ENCODE measurements at regions of chr11 and their contacts with region 1.

Region 1: GRCh38 chr11:29306527-29306926 is 710.3 kb downstream of the KCNA4 start:
- DNase-seq: no peak
- ATAC-seq: no peak
- H3K4me3 ChIP-seq: no peak overlapping the region
- H3K27ac ChIP-seq: no peak overlapping the region
- H3K4me1 ChIP-seq: no peaks in the 10 kb centered on the region
- H3K27me3 ChIP-seq: no peaks in the 10 kb centered on the region
- CTCF ChIP-seq: no peak
- POLR2A ChIP-seq: no peak

Region 2: DNA sequence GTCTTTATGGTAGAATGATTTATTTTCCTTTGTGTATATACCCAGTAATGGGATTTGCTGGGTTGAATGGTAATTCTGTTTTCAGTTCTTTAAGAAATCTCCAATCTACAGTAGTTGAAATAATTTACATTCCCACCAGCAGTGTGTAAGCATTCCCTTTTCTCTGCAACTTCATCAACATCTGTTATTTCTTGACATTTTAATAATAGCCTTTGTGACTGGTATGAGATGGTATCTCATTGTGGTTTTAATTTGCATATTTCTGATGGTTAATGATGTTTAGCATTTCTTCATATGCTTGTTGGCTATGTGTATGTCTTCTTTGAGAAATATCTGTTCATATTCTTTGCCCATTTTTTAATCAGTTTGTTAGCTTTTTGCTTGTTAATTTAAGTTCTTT is 297.1 kb before region 1 on chr11:
- intact Hi-C with region 1: no loop called
- DNase-seq: no peak
- ATAC-seq: no peak
- H3K4me3 ChIP-seq: no peak overlapping the region
- H3K27ac ChIP-seq: no peak overlapping the region
- H3K4me1 ChIP-seq: no peaks in the 10 kb centered on the region
- H3K27me3 ChIP-seq: no peaks in the 10 kb centered on the region
- CTCF ChIP-seq: no peak
- POLR2A ChIP-seq: no peak

Region 3: GRCh38 chr11:29243616-29244015 is 62.9 kb before region 1 on chr11:
- intact Hi-C with region 1: loop called in 1 of 10 experiments (anchors 10 kb)
- DNase-seq: no peak
- ATAC-seq: no peak
- H3K4me3 ChIP-seq: no peak overlapping the region
- H3K27ac ChIP-seq: no peak overlapping the region
- H3K4me1 ChIP-seq: no peaks in the 10 kb centered on the region
- H3K27me3 ChIP-seq: no peaks in the 10 kb centered on the region
- CTCF ChIP-seq: no peak
- POLR2A ChIP-seq: no peak

Region 4: GRCh38 chr11:29260939-29261705 is 45.4 kb before region 1 on chr11:
- intact Hi-C with region 1: loop called in 1 of 10 experiments (anchors 2 kb)
- DNase-seq: no peak
- ATAC-seq: no peak
- H3K4me3 ChIP-seq: no peak overlapping the region
- H3K27ac ChIP-seq: no peak overlapping the region
- H3K4me1 ChIP-seq: no peaks in the 10 kb centered on the region
- H3K27me3 ChIP-seq: no peaks in the 10 kb centered on the region
- CTCF ChIP-seq: no peak
- POLR2A ChIP-seq: no peak